Transverse colon (tissue), 4 donors: ENCODE measurements at regions of chr6 and their contacts with region 1.

Region 1: GRCh38 chr6:13487122-13488014 is at the start of gene GFOD1:
- DNase-seq: peak; percentile 90
- H3K4me3 ChIP-seq: peak within 1 kb of the TSS; percentile 64 to 95 (median 76)
- H3K27ac ChIP-seq: peak within 1 kb of the TSS; percentile 94 to 97 (median 97)
- H3K4me1 ChIP-seq: peaks cover 3 to 33% (median 29%) of the 10 kb centered on the region in 4 donors
- H3K27me3 ChIP-seq: no peaks in the 10 kb centered on the region
- CTCF ChIP-seq: peak in 4 of 5 experiments; percentile 21 to 63 (median 32)
- EP300 ChIP-seq: no peak
- POLR2A ChIP-seq: peak; percentile 88
- total RNA-seq, gene GFOD1: 8.4 to 36.7 (median 19.9) TPM

Region 2: GRCh38 chr6:13383328-13384163 is 103.8 kb before region 1 on chr6:
- in situ Hi-C with region 1: no loop called
- intact Hi-C with region 1: loop called (anchors 5 kb)
- DNase-seq: no peak
- H3K4me3 ChIP-seq: no peak overlapping the region
- H3K27ac ChIP-seq: peak overlapping the region; percentile 20 to 50 (median 36)
- H3K4me1 ChIP-seq: peaks cover 17 to 55% (median 42%) of the 10 kb centered on the region in 4 donors
- H3K27me3 ChIP-seq: no peaks in the 10 kb centered on the region
- CTCF ChIP-seq: peak in 3 of 5 experiments; percentile 8 to 30 (median 10)
- EP300 ChIP-seq: no peak
- POLR2A ChIP-seq: no peak

Region 3: DNA sequence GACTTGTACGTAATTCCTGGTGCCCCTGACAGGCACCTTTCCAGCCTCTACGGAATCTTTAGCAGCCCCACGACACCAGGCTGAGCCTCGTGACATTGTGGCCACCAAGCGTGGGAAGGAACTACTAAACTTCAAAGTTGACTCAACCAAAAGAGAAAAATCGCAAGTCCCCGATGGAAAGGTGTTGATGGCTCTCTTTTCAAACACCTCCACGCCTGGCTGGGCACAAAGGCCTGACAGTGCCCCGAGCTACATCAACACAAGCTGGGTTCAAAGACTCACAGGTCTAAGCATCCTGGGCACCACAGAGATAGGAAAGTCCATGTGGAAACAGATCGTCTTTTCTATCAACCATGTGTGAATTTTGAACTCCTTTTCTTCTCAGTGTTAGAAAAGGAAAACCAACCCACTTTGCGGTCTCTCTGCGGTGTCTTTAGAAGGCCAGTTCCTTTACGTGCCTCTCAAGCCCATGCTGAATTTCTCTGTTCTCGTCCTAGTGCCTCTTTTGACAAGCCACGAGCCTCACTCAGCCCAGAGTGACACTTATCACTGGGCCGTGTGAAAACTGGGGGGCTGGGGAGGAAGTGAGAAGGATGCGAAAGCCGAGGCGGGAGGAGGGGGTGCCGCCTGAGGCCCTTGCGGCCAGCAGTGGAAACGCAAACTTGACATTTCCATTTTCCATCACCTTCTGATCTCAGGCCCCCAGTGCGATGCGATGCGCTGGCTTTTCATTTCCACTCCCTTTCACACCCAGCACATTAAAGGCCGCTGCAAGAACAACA is 59.4 kb before region 1 on chr6:
- in situ Hi-C with region 1: no loop called
- intact Hi-C with region 1: loop called (anchors 1 kb)
- DNase-seq: peak; percentile 59
- H3K4me3 ChIP-seq: no peak overlapping the region
- H3K27ac ChIP-seq: peak overlapping the region; percentile 35 to 41 (median 38)
- H3K4me1 ChIP-seq: peaks cover 0 to 30% (median 9%) of the 10 kb centered on the region in 4 donors
- H3K27me3 ChIP-seq: no peaks in the 10 kb centered on the region
- CTCF ChIP-seq: peak in 2 of 5 experiments; percentile 11 to 18
- EP300 ChIP-seq: no peak
- POLR2A ChIP-seq: no peak

Region 4: DNA sequence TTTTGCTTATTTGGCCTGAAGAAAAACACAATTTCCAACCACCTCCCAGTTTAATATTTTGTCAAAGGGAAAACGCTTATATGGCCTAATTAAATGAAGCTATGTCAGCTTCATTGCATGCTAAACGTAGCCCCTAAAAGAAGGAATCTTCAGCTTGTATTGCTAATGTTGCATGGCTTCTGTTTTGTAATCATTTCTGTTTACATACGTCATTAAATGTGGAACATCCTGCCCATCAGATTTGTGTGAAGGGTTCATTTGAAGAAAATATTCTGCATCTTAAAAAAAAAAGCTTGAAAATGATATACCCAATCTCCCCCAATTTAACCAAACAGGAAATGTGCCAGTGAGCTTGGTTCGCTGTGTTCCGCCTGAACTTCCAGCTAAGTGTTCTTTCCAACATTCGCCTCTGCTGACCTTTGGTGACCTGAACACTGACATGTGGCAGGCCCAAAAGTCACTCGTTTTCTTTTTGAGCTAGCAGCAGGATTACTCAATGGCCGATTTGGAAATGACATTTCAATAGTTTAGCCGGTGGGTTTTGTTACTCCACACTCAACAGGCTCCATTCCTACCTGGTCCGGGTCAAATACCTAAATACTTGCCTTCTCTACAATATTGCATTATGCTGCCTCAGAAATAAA is 74.4 kb after region 1 on chr6:
- in situ Hi-C with region 1: no loop called
- intact Hi-C with region 1: loop called (anchors 10 kb)
- DNase-seq: no peak
- H3K4me3 ChIP-seq: no peak overlapping the region
- H3K27ac ChIP-seq: peak overlapping the region in 2 of 4 donors; percentile 17 to 46
- H3K4me1 ChIP-seq: no peaks in the 10 kb centered on the region
- H3K27me3 ChIP-seq: no peaks in the 10 kb centered on the region
- CTCF ChIP-seq: no peak
- EP300 ChIP-seq: no peak
- POLR2A ChIP-seq: no peak